ENCODE measurements at regions of chr14 and their contacts with region 1.

Region 1: GRCh38 chr14:69107407-69108003 is 45.4 kb downstream of the DCAF5 start:
- DNase-seq: no peak
- H3K4me3 ChIP-seq: no peak overlapping the region
- CTCF ChIP-seq: peak; percentile 46

Region 2: GRCh38 chr14:68805414-68805813 is 302.1 kb before region 1 on chr14:
- CTCF ChIA-PET with region 1: no interaction called
- POLR2A ChIA-PET with region 1: no interaction called
- DNase-seq: no peak
- H3K4me3 ChIP-seq: no peak overlapping the region
- CTCF ChIP-seq: no peak

Region 3: DNA sequence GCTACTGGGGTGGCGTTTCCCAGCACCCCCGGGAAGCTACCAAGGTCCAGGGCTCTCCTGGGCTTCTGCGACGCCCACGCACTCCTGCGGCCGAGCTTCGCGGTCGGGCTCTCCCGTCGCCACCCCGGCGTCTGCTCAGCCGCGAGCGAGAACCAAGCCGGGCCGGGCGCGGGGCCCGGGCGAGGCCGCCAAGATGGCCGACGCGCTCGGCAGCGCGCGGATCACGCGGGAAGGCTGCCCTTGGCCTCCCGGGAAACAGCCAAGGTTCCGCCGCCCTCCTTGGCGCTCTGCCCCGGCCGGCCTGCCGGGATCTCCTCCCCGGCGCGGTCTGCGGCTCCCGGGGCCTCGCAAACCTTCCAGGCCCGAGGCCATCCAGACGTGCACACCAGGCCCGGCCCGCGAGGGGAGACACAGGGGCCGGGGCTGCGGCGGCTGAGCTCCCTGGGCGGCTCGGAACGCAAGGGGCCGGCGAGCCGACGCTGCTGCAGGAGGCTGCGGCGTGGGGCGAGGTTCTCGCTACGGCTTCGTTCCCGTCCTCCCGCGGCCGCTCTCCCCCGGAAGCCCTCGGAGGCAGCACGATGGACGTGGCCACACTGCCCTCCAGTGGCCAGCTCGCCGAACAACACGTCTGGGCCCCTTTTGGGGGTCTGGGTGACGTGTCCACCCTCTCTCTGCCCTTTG is 291.1 kb before region 1 on chr14:
- CTCF ChIA-PET with region 1: interaction called, 12 read pairs
- POLR2A ChIA-PET with region 1: no interaction called
- DNase-seq: no peak
- H3K4me3 ChIP-seq: peak overlapping the region; percentile 49
- CTCF ChIP-seq: peak; percentile 96

Region 4: GRCh38 chr14:68874746-68875155 is 232.8 kb before region 1 on chr14:
- CTCF ChIA-PET with region 1: interaction called, 11 read pairs
- POLR2A ChIA-PET with region 1: no interaction called
- DNase-seq: no peak
- H3K4me3 ChIP-seq: no peak overlapping the region
- CTCF ChIP-seq: no peak

Region 5: DNA sequence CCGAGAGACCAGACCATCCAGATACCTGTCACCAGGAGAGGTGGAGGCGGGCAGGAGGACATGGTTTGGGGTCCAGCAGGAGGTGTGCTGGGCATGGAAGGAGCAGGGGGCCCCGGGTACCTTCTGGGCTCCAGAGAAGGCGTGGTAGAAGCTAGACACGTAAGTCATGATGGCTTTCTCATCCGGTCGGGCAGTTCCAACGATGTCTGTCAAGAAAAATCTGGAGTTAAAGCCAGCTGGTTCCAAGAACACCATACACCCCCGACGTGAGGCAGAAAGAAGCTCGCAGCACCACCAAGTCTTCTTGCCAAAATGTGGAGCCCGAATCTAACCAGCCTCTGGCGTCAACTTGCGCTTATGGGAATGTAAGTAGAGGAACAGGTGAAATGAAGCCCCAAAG is 205.1 kb before region 1 on chr14:
- CTCF ChIA-PET with region 1: interaction called, 154 read pairs
- POLR2A ChIA-PET with region 1: no interaction called
- DNase-seq: no peak
- H3K4me3 ChIP-seq: no peak overlapping the region
- CTCF ChIP-seq: no peak

Region 6: GRCh38 chr14:68939893-68940613 is 167.5 kb before region 1 on chr14:
- CTCF ChIA-PET with region 1: interaction called, 29 read pairs
- POLR2A ChIA-PET with region 1: no interaction called
- DNase-seq: peak; percentile 94
- H3K4me3 ChIP-seq: no peak overlapping the region
- CTCF ChIP-seq: no peak

Region 7: GRCh38 chr14:69090187-69090789 is 17.2 kb before region 1 on chr14:
- CTCF ChIA-PET with region 1: interaction called, 10 read pairs
- POLR2A ChIA-PET with region 1: no interaction called
- DNase-seq: no peak
- H3K4me3 ChIP-seq: no peak overlapping the region
- CTCF ChIP-seq: peak; percentile 70

Region 8: GRCh38 chr14:69335371-69335771 is 227.9 kb after region 1 on chr14:
- CTCF ChIA-PET with region 1: no interaction called
- POLR2A ChIA-PET with region 1: no interaction called
- DNase-seq: no peak
- H3K4me3 ChIP-seq: no peak overlapping the region
- CTCF ChIP-seq: no peak